Ascending aorta (tissue), 2 donors: ENCODE measurements at regions of chr10 and their contacts with region 1.

Region 1: DNA sequence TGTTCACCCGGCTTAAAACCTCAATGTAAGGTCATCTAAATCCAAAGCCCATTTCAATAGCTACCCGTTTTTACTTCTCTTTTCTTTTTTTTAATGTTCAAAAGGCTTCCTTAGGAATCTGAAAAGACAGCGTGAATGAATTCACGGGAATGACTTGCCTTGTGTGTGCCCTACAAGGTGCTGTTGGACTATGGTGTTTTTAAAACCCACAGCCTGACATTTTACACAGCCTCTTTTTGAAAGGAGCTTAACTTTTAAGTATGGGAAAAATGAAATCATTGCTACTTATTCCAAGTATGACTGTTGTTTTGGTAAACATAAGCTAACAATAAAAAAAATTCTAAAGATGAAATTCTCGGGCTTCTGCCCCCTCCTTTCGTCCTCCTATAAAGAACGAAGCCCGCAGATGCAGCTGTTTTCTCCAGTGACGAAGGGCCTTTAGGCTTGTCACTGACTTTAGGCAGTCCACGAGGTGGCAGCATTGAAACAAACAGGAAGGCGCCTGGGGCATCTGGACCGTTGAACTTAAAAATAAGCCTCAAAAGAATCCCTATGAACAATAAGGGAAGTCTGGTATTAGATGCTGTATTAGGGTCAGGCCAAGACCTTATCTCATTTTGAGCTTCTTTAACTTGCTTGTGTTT is 141.3 kb downstream of the NRP1 start:
- DNase-seq: peak; percentile 48 to 91
- H3K4me3 ChIP-seq: no peak overlapping the region
- H3K27ac ChIP-seq: peak overlapping the region; percentile 19 to 64
- H3K4me1 ChIP-seq: peaks cover 0 to 9% of the 10 kb centered on the region in 2 donors
- H3K27me3 ChIP-seq: no peaks in the 10 kb centered on the region
- CTCF ChIP-seq: peak; percentile 72 to 88 (median 86)

Region 2: DNA sequence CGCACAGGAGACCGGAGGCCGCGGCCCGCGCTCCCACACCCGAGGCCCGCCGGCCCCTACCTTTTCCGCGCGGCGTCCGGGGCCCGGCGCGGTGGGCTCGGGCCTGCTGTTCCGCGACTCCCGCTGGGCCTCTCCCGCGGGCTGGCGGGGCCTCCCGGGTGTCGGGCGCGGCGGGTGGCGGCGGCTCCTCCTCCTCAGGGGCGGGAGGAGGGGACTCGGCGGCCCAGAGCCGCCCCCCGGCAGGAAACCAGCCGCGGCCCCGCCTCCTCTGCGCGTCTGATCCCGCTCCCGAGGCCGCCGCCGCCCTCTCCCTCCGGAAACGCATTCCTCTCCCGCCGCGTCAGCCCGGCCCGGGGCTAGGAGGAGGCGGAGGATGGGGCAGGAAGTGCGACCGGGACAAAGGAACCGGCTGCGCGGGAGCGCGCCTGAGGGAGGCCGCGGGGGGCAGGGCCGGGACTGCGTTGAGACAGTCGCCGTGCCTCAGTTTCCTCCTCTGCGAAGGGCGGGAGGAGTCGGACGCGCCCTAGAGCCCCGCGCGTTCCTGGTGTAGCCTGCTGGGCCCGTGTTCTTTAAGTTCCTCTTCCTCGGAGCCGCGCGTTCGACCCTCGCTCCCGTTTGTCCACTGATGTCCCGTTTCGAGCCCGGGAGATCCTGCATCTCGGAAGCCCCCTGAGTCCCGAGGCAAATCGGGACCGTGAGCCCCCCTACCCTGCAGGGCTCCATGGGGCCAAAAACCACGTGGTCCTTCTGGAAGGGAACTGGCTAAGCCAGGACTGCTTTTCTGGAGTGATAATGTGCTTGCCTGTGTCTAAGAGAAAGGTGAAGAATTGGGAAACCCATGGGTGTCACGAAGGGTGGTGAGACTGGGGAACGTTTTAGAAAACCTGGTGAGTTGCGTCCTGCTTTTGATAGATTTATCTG is 234.8 kb before region 1 on chr10 and contains the start of gene ITGB1:
- intact Hi-C with region 1: no loop called
- DNase-seq: peak; percentile 84 to 98
- H3K4me3 ChIP-seq: peak within 1 kb of the TSS; percentile 72 to 90
- H3K27ac ChIP-seq: peak within 1 kb of the TSS; percentile 97 to 99
- H3K4me1 ChIP-seq: peaks cover 4 to 36% of the 10 kb centered on the region in 2 donors
- H3K27me3 ChIP-seq: no peaks in the 10 kb centered on the region
- CTCF ChIP-seq: no peak
- total RNA-seq, gene ITGB1: 569 TPM

Region 3: DNA sequence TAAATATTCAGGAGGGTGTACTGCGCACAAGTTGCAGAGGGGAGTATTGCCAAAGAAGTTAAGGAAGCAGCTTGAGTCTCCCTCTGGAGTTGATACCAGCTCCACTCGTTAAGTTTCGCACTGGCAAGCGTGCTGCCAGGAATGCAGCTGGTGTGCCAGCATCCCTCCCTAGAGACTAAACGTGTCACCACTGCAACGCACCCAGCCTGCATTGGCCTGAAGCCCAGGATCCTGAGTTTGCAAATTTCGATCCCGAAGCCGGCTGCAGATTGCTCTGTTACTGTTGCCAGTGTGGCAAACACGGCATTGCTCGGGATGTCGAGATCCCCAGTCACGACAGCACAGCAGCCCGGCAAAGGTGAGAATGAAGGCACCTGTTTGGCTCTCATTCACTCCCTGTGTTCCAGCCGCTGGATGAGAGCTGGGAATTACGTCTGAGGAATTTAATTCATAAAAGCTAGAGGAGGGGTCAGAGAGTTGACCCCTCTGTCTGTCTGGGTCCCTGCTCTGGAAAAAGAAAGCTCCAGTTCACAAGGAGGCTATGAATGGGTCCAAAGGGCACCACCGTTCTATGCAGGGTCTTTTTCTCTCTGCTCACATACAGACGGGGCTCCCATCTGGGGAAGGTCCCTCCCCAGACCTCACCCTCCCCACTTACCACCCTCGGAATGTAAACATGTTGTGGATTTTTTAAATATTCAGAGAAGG is 80.3 kb after region 1 on chr10:
- intact Hi-C with region 1: loop called (anchors 2 kb)
- DNase-seq: peak; percentile 68 to 97
- H3K4me3 ChIP-seq: peak overlapping the region; percentile 43 to 54
- H3K27ac ChIP-seq: peak overlapping the region; percentile 73 to 93
- H3K4me1 ChIP-seq: peaks cover 0 to 33% of the 10 kb centered on the region in 2 donors
- H3K27me3 ChIP-seq: no peaks in the 10 kb centered on the region
- CTCF ChIP-seq: peak in 1 of 3 experiments; percentile 31

Region 4: DNA sequence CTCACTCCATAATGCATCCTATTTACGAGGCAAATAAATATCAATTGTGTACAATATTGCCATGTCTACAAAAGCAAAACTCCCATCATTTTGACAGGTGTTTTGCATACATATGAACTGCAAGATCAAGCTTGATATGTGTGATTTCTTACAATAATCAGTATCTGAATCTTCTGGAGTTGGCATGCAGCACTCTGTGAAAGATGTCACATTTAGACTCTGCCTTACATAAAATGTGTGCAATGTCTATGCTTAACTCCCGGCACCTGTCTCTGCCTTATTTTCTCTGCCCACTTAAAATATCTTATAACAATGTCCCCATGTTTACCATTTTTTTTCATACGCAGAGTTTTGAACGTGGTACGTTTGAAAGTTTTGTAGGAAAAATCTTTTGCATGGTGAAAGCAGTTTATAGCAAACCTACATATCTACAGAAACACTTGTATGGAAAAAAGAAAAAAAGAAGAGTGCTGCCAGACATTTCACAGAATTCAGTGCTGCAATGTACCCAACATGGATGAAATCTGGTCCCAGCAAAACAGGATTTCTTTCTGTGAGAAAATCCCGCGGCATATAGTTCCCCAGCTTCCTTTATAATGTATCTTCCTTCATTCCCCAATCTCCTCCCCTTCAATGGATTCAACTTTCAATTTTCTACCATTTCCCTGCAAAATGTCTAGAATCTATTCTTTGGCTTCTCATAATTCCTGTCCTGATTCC is 255.4 kb after region 1 on chr10:
- intact Hi-C with region 1: no loop called
- DNase-seq: no peak
- H3K4me3 ChIP-seq: no peak overlapping the region
- H3K27ac ChIP-seq: no peak overlapping the region
- H3K4me1 ChIP-seq: no peaks in the 10 kb centered on the region
- H3K27me3 ChIP-seq: no peaks in the 10 kb centered on the region
- CTCF ChIP-seq: no peak

Region 5: GRCh38 chr10:34273340-34273739 is 1080.2 kb after region 1 on chr10:
- intact Hi-C with region 1: loop called (anchors 10 kb)
- DNase-seq: no peak
- H3K4me3 ChIP-seq: no peak overlapping the region
- H3K27ac ChIP-seq: no peak overlapping the region
- H3K4me1 ChIP-seq: no peaks in the 10 kb centered on the region
- H3K27me3 ChIP-seq: no peaks in the 10 kb centered on the region
- CTCF ChIP-seq: no peak

Region 6: DNA sequence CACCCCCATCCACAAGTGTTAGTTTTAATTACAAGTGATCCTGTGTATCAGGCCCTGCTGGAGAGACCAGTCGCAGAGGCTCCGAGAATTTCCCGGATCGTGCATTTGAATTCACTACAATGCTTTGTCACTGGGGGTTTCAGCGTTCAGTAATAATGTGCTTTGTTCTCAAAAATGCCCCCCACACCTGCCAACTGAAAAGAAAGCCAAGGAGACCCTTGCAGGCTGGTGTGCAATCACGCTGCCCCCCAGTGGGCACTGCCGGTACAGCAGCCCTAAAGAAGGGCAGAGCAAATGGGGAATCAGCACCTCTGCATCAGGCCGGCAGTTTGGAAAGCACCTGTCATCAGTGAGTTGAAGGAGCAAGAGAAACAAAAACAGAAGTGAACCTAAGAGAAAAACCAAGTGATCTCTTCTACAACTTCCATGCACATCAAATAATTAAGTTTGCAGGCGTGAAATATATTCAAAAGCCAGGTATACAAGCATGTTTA is 1444.3 kb after region 1 on chr10:
- intact Hi-C with region 1: loop called (anchors 1 kb)
- DNase-seq: peak in 1 of 2 donors; percentile 78
- H3K4me3 ChIP-seq: no peak overlapping the region
- H3K27ac ChIP-seq: no peak overlapping the region
- H3K4me1 ChIP-seq: peaks cover 0 to 11% of the 10 kb centered on the region in 2 donors
- H3K27me3 ChIP-seq: no peaks in the 10 kb centered on the region
- CTCF ChIP-seq: peak; percentile 86 to 96 (median 95)